Activated CD4-positive, alpha-beta T cell treated with anti-CD3 and anti-CD28 coated beads for 36 hours (primary cell): ENCODE measurements at regions of chr2 and their contacts with region 1.

Region 1: GRCh38 chr2:10302479-10303180 is at the start of gene HPCAL1:
- DNase-seq: peak; percentile 91
- ATAC-seq: peak; percentile 72
- H3K4me3 Mint-ChIP-seq: peak within 1 kb of the TSS; percentile 100
- H3K27ac Mint-ChIP-seq: peak within 1 kb of the TSS; percentile 89
- H3K4me1 Mint-ChIP-seq: peaks cover 65% of the 10 kb centered on the region
- H3K27me3 Mint-ChIP-seq: no peaks in the 10 kb centered on the region
- total RNA-seq, gene HPCAL1: 109 to 114 TPM

Region 2: DNA sequence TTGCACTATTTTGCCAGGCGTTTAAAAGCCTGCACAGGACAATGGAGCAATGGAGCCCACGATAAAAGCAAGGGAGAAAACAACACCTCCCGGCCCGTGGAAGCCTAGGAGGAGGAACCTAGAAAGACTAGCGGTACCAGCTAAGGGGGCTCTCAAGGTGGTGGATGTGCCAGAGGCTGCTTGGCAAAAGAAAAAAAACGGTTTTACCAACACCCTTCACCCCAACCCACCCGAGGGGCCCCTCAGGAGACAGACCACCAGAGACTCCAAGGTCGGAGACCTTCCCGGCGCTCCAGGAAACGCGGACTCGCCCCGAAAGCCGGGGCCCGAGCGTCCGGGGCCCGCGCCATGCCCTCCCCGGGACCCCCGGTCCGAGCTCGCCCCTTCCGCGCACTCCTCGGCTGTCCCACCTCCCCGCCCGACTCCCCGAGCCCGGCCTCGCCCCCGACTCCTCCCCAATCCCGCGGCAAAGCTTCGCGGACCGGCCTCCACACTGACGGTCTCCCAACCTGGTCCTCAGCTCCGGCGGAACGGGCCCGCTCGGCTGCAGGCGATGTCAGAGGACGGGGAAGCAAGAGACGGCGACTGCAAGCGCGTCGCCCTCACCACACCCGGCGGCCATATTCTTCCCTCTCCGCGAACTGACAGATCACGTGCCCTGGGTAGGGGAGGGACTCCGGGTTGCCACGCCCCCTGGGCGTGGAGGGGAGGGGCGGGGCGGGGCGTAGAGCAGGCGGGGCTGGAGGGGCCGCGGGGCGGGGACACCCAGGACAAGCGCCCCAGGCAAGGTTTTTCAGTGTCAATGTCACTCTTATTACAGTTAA is 1465.4 kb before region 1 on chr2 and contains the start of gene KIDINS220:
- CTCF ChIA-PET with region 1: no interaction called
- POLR2A ChIA-PET with region 1: no interaction called
- intact Hi-C with region 1: loop called in 1 of 2 experiments (anchors 10 kb)
- DNase-seq: peak; percentile 92
- ATAC-seq: peak; percentile 95
- H3K4me3 Mint-ChIP-seq: peak within 1 kb of the TSS; percentile 99
- H3K27ac Mint-ChIP-seq: peak within 1 kb of the TSS; percentile 98
- H3K4me1 Mint-ChIP-seq: peaks cover 39% of the 10 kb centered on the region
- H3K27me3 Mint-ChIP-seq: no peaks in the 10 kb centered on the region
- total RNA-seq, gene KIDINS220: 22.7 to 24.4 TPM

Region 3: GRCh38 chr2:10331027-10331701 is 28.5 kb after region 1 on chr2:
- CTCF ChIA-PET with region 1: interaction called, 88 read pairs
- POLR2A ChIA-PET with region 1: interaction called, 9 read pairs
- intact Hi-C with region 1: loop called (anchors 1 kb)
- DNase-seq: peak; percentile 93
- ATAC-seq: peak; percentile 58
- H3K4me3 Mint-ChIP-seq: peak overlapping the region; percentile 91
- H3K27ac Mint-ChIP-seq: peak overlapping the region; percentile 92
- H3K4me1 Mint-ChIP-seq: peaks cover 81% of the 10 kb centered on the region
- H3K27me3 Mint-ChIP-seq: no peaks in the 10 kb centered on the region

Region 4: DNA sequence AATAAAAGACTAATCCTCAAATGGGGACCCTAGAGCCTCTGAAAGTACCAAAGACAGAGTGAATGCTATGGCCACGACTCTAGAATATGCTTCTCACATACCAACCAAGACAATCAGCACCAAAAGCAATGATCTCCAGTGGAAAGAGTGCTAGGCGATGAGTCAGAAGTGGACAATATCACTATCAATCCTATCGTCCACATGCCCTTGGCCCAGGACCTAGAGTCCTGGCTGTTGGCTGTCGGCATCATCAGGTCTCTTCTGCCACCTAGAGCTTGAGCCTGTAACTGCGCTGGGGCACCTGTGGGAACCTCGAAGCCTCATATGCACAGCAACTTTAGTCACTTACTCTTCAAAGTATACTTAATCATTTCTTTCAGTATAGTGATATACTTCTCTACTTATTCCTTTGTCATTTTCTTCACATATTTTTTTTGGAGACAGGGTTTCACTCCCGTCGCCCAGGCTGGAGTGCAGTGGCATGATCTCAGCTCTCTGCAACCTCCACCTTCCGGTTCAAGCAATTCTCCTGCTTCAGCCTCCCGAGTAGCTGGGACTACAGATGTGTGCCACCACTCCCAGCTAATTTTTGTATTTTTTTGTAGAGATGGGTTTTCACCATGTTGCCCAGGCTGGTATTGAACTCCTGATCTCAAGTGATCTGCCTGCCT is 357.4 kb after region 1 on chr2:
- CTCF ChIA-PET with region 1: no interaction called
- POLR2A ChIA-PET with region 1: no interaction called
- intact Hi-C with region 1: loop called in 1 of 2 experiments (anchors 10 kb)
- DNase-seq: peak; percentile 74
- ATAC-seq: peak; percentile 81
- H3K4me3 Mint-ChIP-seq: no peak overlapping the region
- H3K27ac Mint-ChIP-seq: no peak overlapping the region
- H3K4me1 Mint-ChIP-seq: peaks cover 20% of the 10 kb centered on the region
- H3K27me3 Mint-ChIP-seq: no peaks in the 10 kb centered on the region

Region 5: DNA sequence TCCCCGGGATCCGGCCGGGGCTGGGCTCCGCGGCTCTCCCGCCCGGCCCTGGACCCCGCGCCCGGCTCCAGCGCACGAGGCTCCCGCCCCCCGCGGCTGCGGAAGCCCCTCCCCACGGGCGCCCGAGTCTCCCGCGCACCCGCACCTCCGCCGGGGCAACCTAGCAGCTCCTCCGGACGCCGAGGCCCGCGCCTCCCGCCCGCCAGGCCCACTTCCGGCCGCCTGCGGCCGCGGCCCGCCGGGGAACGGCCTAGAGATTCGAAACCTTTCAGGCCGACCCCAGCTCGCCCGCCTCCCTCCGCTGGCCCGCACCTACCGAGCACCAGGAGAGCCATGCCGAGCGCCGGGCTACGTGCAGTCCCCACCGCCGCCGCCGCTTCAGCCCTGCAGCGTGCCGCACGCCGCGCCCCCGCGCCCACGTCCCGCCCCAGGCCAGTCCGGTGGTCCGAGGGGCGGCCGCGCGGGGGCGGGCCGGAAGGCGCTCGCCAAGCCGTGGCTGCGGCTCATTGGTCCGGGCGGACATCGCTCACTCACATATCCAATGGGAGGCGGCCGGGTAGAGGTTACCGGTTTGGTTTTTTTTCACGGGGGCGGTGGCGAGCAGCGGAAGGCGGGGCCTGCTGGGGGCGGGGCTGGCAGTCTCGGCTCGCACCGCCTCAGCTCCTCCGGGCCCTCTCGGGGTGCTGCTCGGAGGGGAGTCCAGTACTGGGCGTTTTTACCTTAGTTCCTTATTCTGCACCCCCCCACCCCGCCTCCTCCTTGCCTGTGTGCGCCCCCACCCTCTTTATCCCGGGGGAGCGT is 509.9 kb after region 1 on chr2 and contains the start of gene PDIA6:
- CTCF ChIA-PET with region 1: no interaction called
- POLR2A ChIA-PET with region 1: no interaction called
- intact Hi-C with region 1: loop called in 1 of 2 experiments (anchors 1 kb)
- DNase-seq: peak; percentile 97
- ATAC-seq: peak; percentile 94
- H3K4me3 Mint-ChIP-seq: peak within 1 kb of the TSS; percentile 89
- H3K27ac Mint-ChIP-seq: peak within 1 kb of the TSS; percentile 90
- H3K4me1 Mint-ChIP-seq: peaks cover 34% of the 10 kb centered on the region
- H3K27me3 Mint-ChIP-seq: peaks cover 1% of the 10 kb centered on the region
- total RNA-seq, gene PDIA6: 123 to 157 TPM